ENCODE measurements at regions of chr19 and their contacts with region 1.

Region 1: GRCh38 chr19:29844891-29845572 is 33.2 kb downstream of the CCNE1 start:
- DNase-seq: peak; percentile 98
- H3K4me3 Mint-ChIP-seq: peak overlapping the region; percentile 87
- H3K27ac Mint-ChIP-seq: peak overlapping the region; percentile 86
- H3K4me1 Mint-ChIP-seq: peaks cover 26% of the 10 kb centered on the region
- H3K27me3 Mint-ChIP-seq: no peaks in the 10 kb centered on the region

Region 2: DNA sequence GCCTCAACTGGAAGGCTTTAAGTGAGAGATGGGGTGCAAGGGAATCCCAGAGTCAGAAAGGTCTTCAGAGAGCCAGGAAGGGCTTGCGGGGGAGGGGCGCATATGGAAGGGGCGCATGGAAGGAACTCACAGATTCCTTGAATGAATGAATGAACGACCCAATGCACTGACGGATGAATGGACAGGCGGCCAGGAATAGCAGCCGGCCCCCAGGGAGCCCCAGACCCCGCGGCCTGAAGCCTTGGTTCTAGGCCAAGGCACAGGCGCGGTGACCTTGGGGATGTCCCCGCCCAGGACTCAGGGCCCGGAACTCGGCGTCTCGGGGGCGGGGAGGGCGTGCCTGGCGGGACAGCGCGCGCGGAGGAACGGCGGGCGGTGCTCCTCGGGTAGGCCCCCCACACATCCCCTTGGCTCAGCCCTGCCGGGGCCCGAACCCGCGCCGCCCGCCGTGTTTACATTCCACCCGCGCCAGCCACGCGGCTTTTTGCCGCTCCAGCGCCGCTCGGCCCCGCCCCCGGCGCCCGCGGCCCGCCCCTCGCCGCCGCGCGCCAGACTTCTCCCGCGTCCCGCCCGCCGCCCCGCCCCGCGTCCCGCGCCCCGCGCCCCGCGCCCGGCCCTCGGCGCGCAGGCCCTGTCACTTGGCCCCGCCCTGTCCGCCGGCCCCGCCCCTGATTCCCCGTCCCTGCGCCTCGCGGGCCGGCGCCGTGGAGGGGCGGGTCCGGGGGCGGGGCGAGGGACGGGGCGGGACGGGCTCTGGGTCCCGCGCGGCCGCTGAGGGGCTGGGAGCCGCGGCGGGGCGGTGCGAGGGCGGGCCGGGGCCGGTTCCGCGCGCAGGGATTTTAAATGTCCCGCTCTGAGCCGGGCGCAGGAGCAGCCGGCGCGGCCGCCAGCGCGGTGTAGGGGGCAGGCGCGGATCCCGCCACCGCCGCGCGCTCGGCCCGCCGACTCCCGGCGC is 33.6 kb before region 1 on chr19 and contains the start of gene CCNE1:
- intact Hi-C with region 1: loop called (anchors 1 kb)
- DNase-seq: peak; percentile 98
- H3K4me3 Mint-ChIP-seq: peak within 1 kb of the TSS; percentile 93
- H3K27ac Mint-ChIP-seq: peak within 1 kb of the TSS; percentile 93
- H3K4me1 Mint-ChIP-seq: peaks cover 27% of the 10 kb centered on the region
- H3K27me3 Mint-ChIP-seq: no peaks in the 10 kb centered on the region
- total RNA-seq, gene CCNE1: 54.5 and 55.8 TPM in 2 replicates

Measured in activated CD4-positive, alpha-beta T cell treated with anti-CD3 and anti-CD28 coated beads, Interleukin-2, amount 10 ng/mL, durations not matched to agents 24 days and 14 days (primary cell).